PC-9 (cell line): ENCODE measurements at regions of chr2 and their contacts with region 1.

Region 1: GRCh38 chr2:73994178-73994831 is 9.6 kb downstream of the TET3 start:
- DNase-seq: no peak
- H3K4me3 ChIP-seq: no peak overlapping the region
- H3K27ac ChIP-seq: no peak overlapping the region
- H3K4me1 ChIP-seq: peaks cover 48% of the 10 kb centered on the region
- H3K27me3 ChIP-seq: no peaks in the 10 kb centered on the region
- CTCF ChIP-seq: no peak

Region 2: DNA sequence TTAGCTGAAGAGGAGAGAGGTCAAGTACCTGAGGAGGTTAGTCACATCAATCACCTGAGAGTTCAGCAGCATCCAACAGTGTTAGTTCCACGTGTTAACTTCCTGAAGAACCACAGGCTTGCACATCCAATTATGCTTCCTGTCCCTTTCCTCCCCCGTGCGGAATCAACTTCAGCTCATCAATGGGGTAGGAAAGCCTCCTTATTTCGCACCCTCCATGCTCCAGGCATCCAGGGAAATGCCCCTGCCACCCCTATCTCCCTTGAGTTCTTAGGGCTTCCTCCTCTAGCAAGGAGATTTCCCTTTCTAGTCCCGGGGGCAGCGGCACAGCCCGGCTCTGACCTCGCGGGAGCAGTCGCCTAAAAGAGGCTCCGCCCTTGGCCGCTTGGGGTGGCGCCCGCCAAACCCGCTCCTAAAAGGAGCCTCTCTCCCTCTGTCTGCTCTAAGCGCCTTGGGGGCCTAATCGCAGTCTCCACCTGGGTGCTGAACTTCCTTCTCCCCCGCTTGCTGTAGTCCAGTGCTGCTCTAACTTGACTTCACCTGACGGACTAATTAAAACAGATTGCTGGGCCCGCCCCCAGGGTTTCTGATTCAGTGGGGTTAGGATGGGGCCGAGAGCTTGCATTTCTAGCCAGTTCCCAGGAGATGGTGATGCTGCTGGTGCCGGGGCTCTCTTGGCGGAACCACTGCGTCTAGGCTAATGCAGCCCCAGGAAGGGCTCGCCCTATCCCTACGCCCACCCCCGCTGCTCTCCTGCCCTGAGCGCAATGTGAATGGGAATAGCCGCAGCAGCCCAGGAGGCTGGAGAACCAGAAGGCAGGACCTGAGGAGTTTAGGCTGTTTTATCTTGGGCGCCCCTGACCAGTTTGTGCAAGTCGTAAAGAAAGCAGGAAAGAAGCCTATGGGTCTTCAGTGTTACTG is 13.0 kb before region 1 on chr2:
- CTCF ChIA-PET with region 1: no interaction called
- POLR2A ChIA-PET with region 1: no interaction called
- intact Hi-C with region 1: no loop called
- DNase-seq: peak in 1 of 2 experiments; percentile 19
- H3K4me3 ChIP-seq: no peak overlapping the region
- H3K27ac ChIP-seq: no peak overlapping the region
- H3K4me1 ChIP-seq: peaks cover 53% of the 10 kb centered on the region
- H3K27me3 ChIP-seq: no peaks in the 10 kb centered on the region
- CTCF ChIP-seq: no peak

Region 3: DNA sequence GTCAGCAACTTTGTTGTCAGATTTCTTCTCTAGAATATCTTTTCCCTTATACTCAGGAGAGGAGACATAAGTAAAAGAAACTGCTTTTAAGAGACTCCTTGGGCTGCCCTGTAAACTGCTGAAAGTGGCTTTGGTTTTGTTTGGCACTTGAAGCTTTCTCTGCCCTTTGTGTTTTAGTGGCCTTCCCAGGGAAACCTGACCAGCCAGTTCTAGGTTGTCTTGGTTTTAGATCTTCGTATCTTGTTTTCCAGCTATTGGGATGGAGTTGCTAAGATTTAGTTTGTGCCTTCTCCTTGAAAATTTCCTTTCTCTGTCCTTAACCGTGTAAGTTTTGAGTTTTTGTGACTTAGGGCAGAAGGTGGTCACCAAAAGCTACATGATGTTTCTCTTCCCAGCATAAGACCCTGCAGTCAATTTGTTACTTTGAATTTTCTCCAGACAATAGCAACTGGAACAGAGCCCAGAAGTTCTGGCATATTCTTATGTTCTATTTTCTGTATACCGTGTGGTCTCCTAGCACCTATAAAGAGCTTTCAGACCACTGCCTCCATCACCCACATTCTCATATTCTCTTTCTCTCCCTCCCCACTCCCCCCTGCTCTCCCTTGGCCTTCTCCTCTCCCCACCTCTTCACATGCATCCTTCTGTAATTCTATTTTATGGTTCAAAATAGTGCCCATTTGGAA is 72.4 kb after region 1 on chr2:
- CTCF ChIA-PET with region 1: no interaction called
- POLR2A ChIA-PET with region 1: no interaction called
- intact Hi-C with region 1: loop called (anchors 2 kb)
- DNase-seq: peak in 1 of 2 experiments; percentile 13
- H3K4me3 ChIP-seq: no peak overlapping the region
- H3K27ac ChIP-seq: no peak overlapping the region
- H3K4me1 ChIP-seq: no peaks in the 10 kb centered on the region
- H3K27me3 ChIP-seq: no peaks in the 10 kb centered on the region
- CTCF ChIP-seq: no peak

Region 4: DNA sequence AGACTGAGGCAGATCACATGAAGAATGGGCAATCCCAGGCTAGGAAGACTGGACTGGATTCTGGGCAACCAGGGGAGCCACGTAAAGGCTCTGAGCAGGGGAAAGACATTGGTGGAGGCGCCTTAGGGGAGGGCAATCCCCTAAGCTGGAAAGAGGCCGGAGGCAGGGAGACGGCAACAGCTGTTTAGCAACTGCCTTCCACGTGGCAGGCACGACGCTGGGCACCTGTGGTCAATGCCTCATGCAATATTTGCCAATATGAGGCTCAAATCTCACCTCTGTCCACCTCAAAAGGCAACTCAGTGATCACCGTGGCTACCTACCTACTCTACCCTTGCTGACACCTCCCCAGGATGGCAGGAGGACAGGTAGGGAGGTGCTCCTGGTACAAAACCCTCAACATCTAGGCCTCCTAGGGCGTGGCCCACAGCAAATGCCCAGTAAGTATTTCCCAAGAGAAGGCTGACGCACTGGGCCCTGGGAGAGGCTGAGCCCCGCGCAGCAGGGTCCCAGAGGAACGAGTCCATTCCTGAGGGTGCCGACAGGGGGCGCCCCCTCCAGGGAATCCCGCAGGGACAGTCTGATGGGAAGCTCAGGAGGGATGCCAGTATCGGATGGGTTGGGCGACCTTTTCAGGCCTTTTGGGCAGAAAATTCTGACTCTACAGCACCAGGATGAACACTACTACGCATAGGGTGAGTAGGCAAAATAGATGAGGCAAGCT is 144.5 kb after region 1 on chr2:
- CTCF ChIA-PET with region 1: no interaction called
- POLR2A ChIA-PET with region 1: interaction called, 10 read pairs
- intact Hi-C with region 1: loop called (anchors 10 kb)
- DNase-seq: no peak
- H3K4me3 ChIP-seq: no peak overlapping the region
- H3K27ac ChIP-seq: no peak overlapping the region
- H3K4me1 ChIP-seq: no peaks in the 10 kb centered on the region
- H3K27me3 ChIP-seq: no peaks in the 10 kb centered on the region
- CTCF ChIP-seq: no peak

Region 5: DNA sequence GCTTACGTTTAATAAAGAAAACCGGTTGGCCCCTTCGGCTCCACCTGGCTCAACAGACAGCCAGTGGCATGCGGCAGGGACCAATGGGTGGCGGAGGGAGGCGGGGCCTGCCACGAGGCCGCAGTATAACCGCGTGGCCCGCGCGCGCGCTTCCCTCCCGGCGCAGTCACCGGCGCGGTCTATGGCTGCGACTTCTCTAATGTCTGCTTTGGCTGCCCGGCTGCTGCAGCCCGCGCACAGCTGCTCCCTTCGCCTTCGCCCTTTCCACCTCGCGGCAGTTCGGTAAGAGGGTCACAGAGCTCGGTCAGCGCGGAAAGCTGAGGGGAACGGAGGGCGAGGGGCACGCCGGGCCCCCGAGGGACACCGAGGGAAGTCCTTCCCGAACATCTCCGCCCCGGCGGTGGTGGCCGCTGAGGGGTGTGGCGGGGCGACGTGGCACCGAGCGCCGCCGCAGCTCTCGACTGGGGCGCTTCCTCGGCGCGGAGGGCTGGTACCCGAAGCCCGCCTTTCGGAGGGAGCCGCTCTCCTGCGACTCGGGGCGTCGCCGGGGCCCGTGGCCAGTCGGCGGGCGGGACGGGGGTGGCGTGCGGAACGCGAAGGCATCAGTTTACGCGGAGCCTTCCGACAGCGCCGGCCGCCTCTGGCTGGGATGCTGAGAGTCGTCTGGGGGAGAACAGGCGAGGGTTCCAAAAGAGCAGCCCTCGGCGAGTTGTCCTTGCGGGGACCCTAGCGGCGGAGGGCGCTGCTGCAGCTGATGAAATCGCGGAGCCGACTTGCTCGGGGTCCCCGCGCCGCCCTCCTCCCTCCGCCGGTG is 204.4 kb after region 1 on chr2 and contains the start of gene MTHFD2:
- CTCF ChIA-PET with region 1: interaction called, 14 read pairs
- POLR2A ChIA-PET with region 1: no interaction called
- intact Hi-C with region 1: no loop called
- DNase-seq: peak; percentile 93 to 97
- H3K4me3 ChIP-seq: peak within 1 kb of the TSS; percentile 94
- H3K27ac ChIP-seq: peak within 1 kb of the TSS; percentile 97
- H3K4me1 ChIP-seq: peaks cover 34% of the 10 kb centered on the region
- H3K27me3 ChIP-seq: no peaks in the 10 kb centered on the region
- CTCF ChIP-seq: peak; percentile 85
- total RNA-seq, gene MTHFD2: 192 and 197 TPM in 2 replicates